ENCODE measurements at regions of chr12 and their contacts with region 1.

Region 1: GRCh38 chr12:49553512-49554088 is 14.3 kb downstream of the MCRS1 start:
- DNase-seq: peak; percentile 65
- H3K4me3 Mint-ChIP-seq: no peak overlapping the region
- H3K27ac Mint-ChIP-seq: no peak overlapping the region
- H3K4me1 Mint-ChIP-seq: peaks cover 13% of the 10 kb centered on the region
- H3K27me3 Mint-ChIP-seq: peaks cover 15% of the 10 kb centered on the region
- CTCF ChIP-seq: peak; percentile 58

Region 2: GRCh38 chr12:49130151-49131050 is 423.2 kb before region 1 on chr12:
- CTCF ChIA-PET with region 1: no interaction called
- POLR2A ChIA-PET with region 1: no interaction called
- intact Hi-C with region 1: no loop called
- DNase-seq: peak; percentile 91
- H3K4me3 Mint-ChIP-seq: peak overlapping the region; percentile 94
- H3K27ac Mint-ChIP-seq: peak overlapping the region; percentile 96
- H3K4me1 Mint-ChIP-seq: no peaks in the 10 kb centered on the region
- H3K27me3 Mint-ChIP-seq: no peaks in the 10 kb centered on the region
- CTCF ChIP-seq: peak; percentile 91

Region 3: DNA sequence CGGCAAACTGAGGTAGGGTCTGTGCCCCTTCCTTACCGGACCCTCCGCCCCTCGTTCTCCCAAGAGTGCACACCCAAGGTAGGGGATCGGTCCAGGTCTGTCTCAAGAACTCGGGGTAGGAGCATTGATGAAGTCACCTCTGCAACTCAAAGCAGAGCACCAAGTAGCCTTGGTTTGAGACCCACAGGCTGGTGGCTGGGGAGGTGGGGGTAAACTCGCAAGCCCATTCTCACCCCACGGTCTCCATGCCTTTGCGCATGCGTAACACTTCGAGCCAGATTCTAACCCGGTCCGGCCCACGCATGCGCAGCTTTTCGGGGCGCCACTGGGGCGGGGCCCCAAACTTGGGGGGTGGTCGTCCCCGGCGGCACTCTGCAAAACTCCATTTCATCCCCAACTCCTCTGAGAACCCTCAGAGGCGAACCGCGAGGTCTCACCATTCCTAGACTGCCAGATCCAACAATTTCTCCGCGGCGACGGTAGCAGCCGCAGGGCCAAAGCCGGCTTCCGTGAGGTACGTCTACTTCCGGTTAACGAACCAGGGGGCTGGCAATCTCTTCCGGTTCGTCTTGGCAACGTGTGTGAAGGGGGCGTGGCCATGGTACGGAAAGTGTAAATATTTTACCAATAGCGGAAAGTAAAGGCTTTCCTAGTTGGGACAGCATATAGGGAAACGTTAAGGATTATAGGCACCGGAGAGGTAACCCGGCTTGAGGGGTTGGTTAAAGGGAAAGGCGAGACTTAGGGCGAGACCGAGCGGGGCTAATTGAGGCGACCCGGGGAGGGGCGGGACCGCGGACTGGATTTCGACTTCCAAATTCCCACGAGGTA is 14.2 kb after region 1 on chr12 and contains the start of gene MCRS1:
- CTCF ChIA-PET with region 1: interaction called, 9 read pairs
- POLR2A ChIA-PET with region 1: interaction called, 19 read pairs
- intact Hi-C with region 1: no loop called
- DNase-seq: peak; percentile 92
- H3K4me3 Mint-ChIP-seq: peak within 1 kb of the TSS; percentile 90
- H3K27ac Mint-ChIP-seq: peak within 1 kb of the TSS; percentile 98
- H3K4me1 Mint-ChIP-seq: peaks cover 14% of the 10 kb centered on the region
- H3K27me3 Mint-ChIP-seq: no peaks in the 10 kb centered on the region
- CTCF ChIP-seq: no peak
- total RNA-seq, gene MCRS1: 34.3 and 58.7 TPM in 2 replicates

Region 4: GRCh38 chr12:49588721-49589516 is 35.3 kb after region 1 on chr12:
- CTCF ChIA-PET with region 1: no interaction called
- POLR2A ChIA-PET with region 1: no interaction called
- intact Hi-C with region 1: no loop called
- DNase-seq: peak; percentile 12
- H3K4me3 Mint-ChIP-seq: no peak overlapping the region
- H3K27ac Mint-ChIP-seq: no peak overlapping the region
- H3K4me1 Mint-ChIP-seq: no peaks in the 10 kb centered on the region
- H3K27me3 Mint-ChIP-seq: no peaks in the 10 kb centered on the region
- CTCF ChIP-seq: no peak

Region 5: GRCh38 chr12:49776413-49776812 is 222.8 kb after region 1 on chr12:
- CTCF ChIA-PET with region 1: no interaction called
- POLR2A ChIA-PET with region 1: no interaction called
- intact Hi-C with region 1: no loop called
- DNase-seq: peak; percentile 82
- H3K4me3 Mint-ChIP-seq: no peak overlapping the region
- H3K27ac Mint-ChIP-seq: peak overlapping the region; percentile 42
- H3K4me1 Mint-ChIP-seq: peaks cover 17% of the 10 kb centered on the region
- H3K27me3 Mint-ChIP-seq: peaks cover 20% of the 10 kb centered on the region
- CTCF ChIP-seq: peak; percentile 92

Measured in MCF 10A (cell line).